ENCODE measurements at regions of chr13 and their contacts with region 1.

Region 1: GRCh38 chr13:109145631-109146030 is 516.2 kb downstream of the MYO16 start:
- DNase-seq: no peak
- H3K4me3 ChIP-seq: no peak overlapping the region
- CTCF ChIP-seq: peak; percentile 80

Region 2: GRCh38 chr13:109135018-109135417 is 10.6 kb before region 1 on chr13:
- CTCF ChIA-PET with region 1: interaction called, 10 read pairs
- POLR2A ChIA-PET with region 1: no interaction called
- DNase-seq: no peak
- H3K4me3 ChIP-seq: no peak overlapping the region
- CTCF ChIP-seq: peak; percentile 3

Region 3: DNA sequence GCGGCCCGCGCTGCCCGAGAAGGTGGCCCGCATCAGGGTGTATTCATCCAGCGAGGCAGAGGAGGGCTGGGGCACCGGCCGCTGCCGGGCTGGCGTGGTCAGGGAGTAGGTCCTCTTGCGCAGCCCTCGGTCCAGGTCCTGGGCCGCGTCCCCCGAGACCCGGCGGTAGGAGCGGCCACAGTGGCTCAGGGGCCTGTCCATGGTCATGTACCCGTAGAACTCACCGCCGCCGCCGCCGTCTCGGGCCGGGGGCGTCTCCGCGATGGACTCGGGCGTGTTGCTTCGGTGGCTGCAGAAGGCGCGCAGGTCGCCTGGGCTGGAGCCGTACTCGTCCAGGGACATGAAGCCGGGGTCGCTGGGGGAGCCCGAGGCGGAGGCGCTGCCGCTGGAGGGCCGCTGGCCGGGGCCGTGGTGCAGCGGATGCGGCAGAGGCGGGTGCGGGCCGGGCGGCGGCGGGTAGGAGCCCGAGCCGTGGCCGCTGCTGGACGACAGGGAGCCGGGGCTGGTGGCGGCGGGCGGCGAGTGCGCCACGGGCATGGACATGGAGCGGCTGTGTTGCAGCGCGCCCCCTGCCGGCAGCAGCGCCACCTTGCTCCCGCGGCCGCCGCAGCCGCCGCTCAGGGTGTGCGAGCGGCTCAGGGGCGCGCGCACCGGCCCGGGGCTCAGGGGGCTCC is 638.7 kb after region 1 on chr13:
- CTCF ChIA-PET with region 1: interaction called, 13 read pairs
- POLR2A ChIA-PET with region 1: no interaction called
- DNase-seq: no peak
- H3K4me3 ChIP-seq: peak overlapping the region; percentile 64
- CTCF ChIP-seq: peak; percentile 74